CD8-positive, alpha-beta T cell (primary cell): ENCODE measurements at regions of chr12 and their contacts with region 1.

Region 1: DNA sequence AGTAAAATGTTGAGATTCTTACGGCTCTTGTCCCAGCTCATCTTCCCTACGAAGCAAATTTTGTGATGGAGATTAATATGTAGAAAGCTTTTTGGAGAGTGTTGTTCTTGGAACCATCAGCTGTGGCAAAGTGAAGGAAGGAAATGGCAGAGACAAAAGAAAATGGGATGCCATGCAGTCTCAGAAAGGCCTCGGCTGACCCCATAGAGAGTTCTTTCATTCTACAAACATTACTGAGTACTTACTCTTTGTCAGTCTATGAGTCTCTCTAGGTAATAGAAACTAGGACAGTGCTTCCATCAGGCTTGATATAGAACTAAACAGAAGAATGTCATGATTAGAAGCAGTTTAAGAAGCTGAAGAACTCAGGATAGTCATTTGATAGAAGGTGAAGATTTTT is 134.1 kb downstream of the PLEKHA5 start:
- DNase-seq: no peak
- ATAC-seq: no peak
- H3K4me3 ChIP-seq: no peak overlapping the region
- H3K4me3 Mint-ChIP-seq: no peak overlapping the region
- H3K27ac ChIP-seq: no peak overlapping the region
- H3K27ac Mint-ChIP-seq: no peak overlapping the region
- H3K4me1 ChIP-seq: no peaks in the 10 kb centered on the region
- H3K4me1 Mint-ChIP-seq: no peaks in the 10 kb centered on the region
- H3K27me3 ChIP-seq: no peaks in the 10 kb centered on the region
- H3K27me3 Mint-ChIP-seq: no peaks in the 10 kb centered on the region
- CTCF ChIP-seq: no peak

Region 2: DNA sequence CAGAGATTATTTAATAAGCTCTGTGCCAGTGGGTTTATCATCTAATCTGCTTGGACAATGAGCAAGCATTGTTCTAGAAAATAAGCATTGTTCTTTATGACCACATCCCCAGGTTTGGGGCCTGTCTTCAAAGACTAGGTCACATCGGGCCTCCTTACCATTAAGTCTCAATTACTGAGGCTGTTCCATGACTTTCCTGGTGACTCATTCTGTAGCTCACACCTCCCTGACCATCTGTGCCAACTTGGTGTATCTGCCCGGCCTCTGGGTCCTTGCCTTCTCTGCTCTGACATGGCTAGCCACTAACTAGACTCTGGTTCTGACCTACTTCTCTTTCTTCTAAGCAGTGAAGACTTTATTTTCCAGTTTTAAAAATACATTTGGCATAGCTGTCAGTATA is 178.6 kb before region 1 on chr12:
- CTCF ChIA-PET with region 1: no interaction called
- POLR2A ChIA-PET with region 1: no interaction called
- intact Hi-C with region 1: no loop called
- DNase-seq: no peak
- ATAC-seq: no peak
- H3K4me3 ChIP-seq: no peak overlapping the region
- H3K4me3 Mint-ChIP-seq: no peak overlapping the region
- H3K27ac ChIP-seq: no peak overlapping the region
- H3K27ac Mint-ChIP-seq: no peak overlapping the region
- H3K4me1 ChIP-seq: no peaks in the 10 kb centered on the region
- H3K4me1 Mint-ChIP-seq: no peaks in the 10 kb centered on the region
- H3K27me3 ChIP-seq: no peaks in the 10 kb centered on the region
- H3K27me3 Mint-ChIP-seq: no peaks in the 10 kb centered on the region
- CTCF ChIP-seq: no peak

Region 3: GRCh38 chr12:19223018-19223417 is 40.7 kb before region 1 on chr12:
- CTCF ChIA-PET with region 1: no interaction called
- POLR2A ChIA-PET with region 1: no interaction called
- intact Hi-C with region 1: no loop called
- DNase-seq: peak in 1 of 9 experiments; percentile 5
- ATAC-seq: no peak
- H3K4me3 ChIP-seq: no peak overlapping the region
- H3K4me3 Mint-ChIP-seq: no peak overlapping the region
- H3K27ac ChIP-seq: no peak overlapping the region
- H3K27ac Mint-ChIP-seq: no peak overlapping the region
- H3K4me1 ChIP-seq: no peaks in the 10 kb centered on the region
- H3K4me1 Mint-ChIP-seq: no peaks in the 10 kb centered on the region
- H3K27me3 ChIP-seq: no peaks in the 10 kb centered on the region
- H3K27me3 Mint-ChIP-seq: no peaks in the 10 kb centered on the region
- CTCF ChIP-seq: peak; percentile 6

Region 4: GRCh38 chr12:19277707-19278106 is 14.0 kb after region 1 on chr12:
- CTCF ChIA-PET with region 1: no interaction called
- POLR2A ChIA-PET with region 1: interaction called, 5 read pairs
- intact Hi-C with region 1: loop called in 1 of 2 experiments (anchors 1 kb)
- DNase-seq: no peak
- ATAC-seq: no peak
- H3K4me3 ChIP-seq: no peak overlapping the region
- H3K4me3 Mint-ChIP-seq: no peak overlapping the region
- H3K27ac ChIP-seq: no peak overlapping the region
- H3K27ac Mint-ChIP-seq: no peak overlapping the region
- H3K4me1 ChIP-seq: peaks cover 13% of the 10 kb centered on the region
- H3K4me1 Mint-ChIP-seq: peaks cover 17% of the 10 kb centered on the region
- H3K27me3 ChIP-seq: no peaks in the 10 kb centered on the region
- H3K27me3 Mint-ChIP-seq: no peaks in the 10 kb centered on the region
- CTCF ChIP-seq: no peak